ENCODE measurements at regions of chr19 and their contacts with region 1.

Region 1: DNA sequence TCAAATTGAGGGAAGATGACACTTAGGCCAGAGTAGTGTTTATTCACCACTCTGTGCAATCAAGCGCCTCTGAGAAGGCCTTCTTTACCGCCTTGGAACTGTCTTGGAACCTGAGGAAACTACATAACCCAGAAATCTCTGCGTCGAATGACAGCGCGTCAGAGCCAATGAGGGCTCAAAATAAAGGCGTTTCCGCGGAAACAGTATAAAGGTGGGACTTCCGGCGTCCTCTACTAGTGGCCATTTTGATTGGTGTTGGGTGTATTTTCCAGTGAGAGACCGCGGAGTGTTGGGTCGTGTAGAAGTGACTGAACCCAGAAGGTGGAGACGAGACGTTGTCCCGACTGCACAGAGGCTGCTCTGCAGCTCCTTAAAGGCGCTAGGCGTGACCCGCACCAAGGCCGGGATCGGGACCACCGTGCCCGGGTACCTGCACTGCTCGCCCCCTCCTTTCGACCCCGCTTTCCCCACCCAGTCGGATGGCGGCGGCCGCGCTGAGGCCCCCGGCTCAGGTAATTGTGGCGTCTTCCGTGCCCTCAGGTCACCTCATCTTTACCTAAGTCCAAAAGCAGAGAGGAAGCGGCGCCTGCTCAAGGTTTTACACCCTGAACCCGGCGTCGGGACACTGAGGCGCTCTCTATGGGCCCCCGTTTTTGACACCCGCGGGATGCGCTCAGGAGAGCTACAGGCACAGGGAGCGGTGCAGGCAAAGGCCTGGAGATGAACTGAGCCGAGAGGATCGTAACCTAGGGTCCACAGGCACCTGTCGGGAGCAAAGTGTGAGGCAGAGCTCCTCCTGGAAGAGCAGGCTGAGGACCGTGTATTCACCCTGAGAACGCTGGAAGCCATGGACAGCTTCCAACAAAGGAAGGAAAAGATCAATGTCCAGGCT is at the start of gene ZNF776:
- DNase-seq: peak; percentile 87
- H3K4me3 ChIP-seq: peak within 1 kb of the TSS; percentile 67 to 91 (median 78)
- H3K27ac ChIP-seq: peak within 1 kb of the TSS; percentile 82 to 89 (median 84)
- H3K4me1 ChIP-seq: peaks cover 0 to 26% (median 22%) of the 10 kb centered on the region in 4 donors
- H3K27me3 ChIP-seq: no peaks in the 10 kb centered on the region
- CTCF ChIP-seq: no peak
- EP300 ChIP-seq: no peak
- POLR2A ChIP-seq: no peak
- total RNA-seq, gene ZNF776: 8.3 to 12.5 (median 11.5) TPM

Region 2: DNA sequence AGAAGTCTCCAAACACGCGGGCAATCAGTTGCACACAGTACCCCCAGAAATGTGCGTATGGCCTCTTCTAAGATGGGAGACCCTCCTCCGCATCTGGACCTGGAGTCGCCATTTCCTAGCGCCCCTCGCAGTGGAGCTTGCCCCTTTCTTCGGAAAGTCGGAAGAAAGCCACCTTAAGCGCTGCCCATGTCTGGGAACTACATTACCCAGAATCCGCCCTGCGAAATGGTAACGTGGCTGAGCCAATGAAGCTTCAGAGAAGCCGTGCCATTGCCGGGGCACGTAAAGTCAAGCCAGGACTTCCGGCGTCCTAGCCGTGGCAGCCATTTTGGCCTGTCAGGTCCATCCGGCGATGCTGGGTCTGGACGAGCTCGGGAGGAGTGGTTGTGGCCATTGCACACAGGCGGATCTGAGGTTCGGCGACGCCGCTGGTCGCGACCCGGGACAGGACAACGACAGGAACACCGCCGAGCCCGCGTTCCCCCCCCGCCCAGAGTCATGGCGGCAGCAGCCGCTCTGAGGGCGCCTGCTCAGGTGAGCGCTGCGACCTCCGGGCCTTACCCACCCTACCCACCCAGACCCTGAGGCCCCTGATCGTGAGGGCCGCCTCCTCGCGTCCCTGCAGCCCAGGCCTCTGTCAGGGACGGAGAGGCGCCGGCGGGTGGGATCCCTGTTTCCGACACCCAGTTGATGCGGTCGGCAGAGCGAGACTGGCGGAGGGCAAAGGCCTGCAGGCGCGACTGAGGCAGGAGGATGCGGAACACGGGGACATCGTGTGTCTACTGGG is 22.7 kb after region 1 on chr19 and contains the start of gene ZNF586:
- intact Hi-C with region 1: loop called (anchors 2 kb)
- DNase-seq: peak; percentile 93
- H3K4me3 ChIP-seq: peak within 1 kb of the TSS; percentile 87 to 98 (median 96)
- H3K27ac ChIP-seq: peak within 1 kb of the TSS; percentile 81 to 92 (median 86)
- H3K4me1 ChIP-seq: peaks cover 0 to 22% (median 16%) of the 10 kb centered on the region in 4 donors
- H3K27me3 ChIP-seq: no peaks in the 10 kb centered on the region
- CTCF ChIP-seq: no peak
- EP300 ChIP-seq: no peak
- POLR2A ChIP-seq: peak in 1 of 2 donors; percentile 18
- total RNA-seq, gene ZNF586: 14.7 to 17.3 (median 15.6) TPM

Measured in sigmoid colon (tissue), 7 donors.